ENCODE measurements at regions of chr3 and their contacts with region 1.

Region 1: DNA sequence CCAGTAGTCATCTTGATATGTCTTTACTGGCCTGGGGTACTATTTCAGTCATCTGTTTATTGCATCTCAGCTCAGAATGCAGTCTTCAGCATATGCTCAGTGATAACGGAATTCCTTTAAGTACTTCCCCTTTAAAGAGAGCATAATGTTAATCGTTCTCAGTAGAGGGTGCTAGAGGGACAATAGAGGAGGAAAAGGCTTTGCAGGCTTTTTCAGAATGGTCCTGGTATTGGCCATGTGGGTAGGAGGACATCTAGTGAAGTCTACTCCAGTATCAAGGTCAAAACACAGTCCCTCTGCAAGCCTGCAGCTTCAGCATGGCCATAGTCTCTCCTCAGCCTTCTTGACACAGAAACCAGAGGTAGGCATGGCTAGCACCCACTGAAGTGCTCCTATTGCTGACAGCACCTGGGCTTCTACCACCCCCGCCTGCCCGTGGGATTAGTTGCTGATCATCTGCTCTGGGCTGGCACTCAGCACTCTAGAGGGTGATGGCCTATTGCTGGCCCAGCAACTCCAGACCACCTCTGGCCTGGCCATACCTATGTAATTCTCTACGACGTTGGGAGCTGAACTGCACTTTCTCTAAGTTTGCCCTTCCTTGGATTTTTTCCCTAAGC is 65.4 kb downstream of the KCNH8 start:
- DNase-seq: peak; percentile 67
- ATAC-seq: peak; percentile 69
- H3K4me3 ChIP-seq: no peak overlapping the region
- H3K4me3 Mint-ChIP-seq: no peak overlapping the region
- H3K27ac ChIP-seq: no peak overlapping the region
- H3K27ac Mint-ChIP-seq: no peak overlapping the region
- H3K4me1 ChIP-seq: peaks cover 0 to 7% of the 10 kb centered on the region in 2 donors
- H3K4me1 Mint-ChIP-seq: peaks cover 4% of the 10 kb centered on the region
- H3K27me3 ChIP-seq: no peaks in the 10 kb centered on the region
- H3K27me3 Mint-ChIP-seq: no peaks in the 10 kb centered on the region
- CTCF ChIP-seq: peak; percentile 58

Region 2: GRCh38 chr3:19146685-19147650 is 66.7 kb before region 1 on chr3:
- CTCF ChIA-PET with region 1: interaction called, 8 read pairs
- POLR2A ChIA-PET with region 1: no interaction called
- intact Hi-C with region 1: loop called (anchors 2 kb)
- DNase-seq: peak; percentile 89
- ATAC-seq: peak; percentile 63
- H3K4me3 ChIP-seq: peak overlapping the region; percentile 49 to 84 (median 68)
- H3K4me3 Mint-ChIP-seq: peak overlapping the region; percentile 95
- H3K27ac ChIP-seq: peak overlapping the region; percentile 50 to 80
- H3K27ac Mint-ChIP-seq: peak overlapping the region; percentile 91
- H3K4me1 ChIP-seq: peaks cover 18 to 22% of the 10 kb centered on the region in 2 donors
- H3K4me1 Mint-ChIP-seq: peaks cover 24% of the 10 kb centered on the region
- H3K27me3 ChIP-seq: peaks cover 0 to 5% (median 2%) of the 10 kb centered on the region in 4 experiments
- H3K27me3 Mint-ChIP-seq: peaks cover 13% of the 10 kb centered on the region
- CTCF ChIP-seq: peak; percentile 72

Region 3: DNA sequence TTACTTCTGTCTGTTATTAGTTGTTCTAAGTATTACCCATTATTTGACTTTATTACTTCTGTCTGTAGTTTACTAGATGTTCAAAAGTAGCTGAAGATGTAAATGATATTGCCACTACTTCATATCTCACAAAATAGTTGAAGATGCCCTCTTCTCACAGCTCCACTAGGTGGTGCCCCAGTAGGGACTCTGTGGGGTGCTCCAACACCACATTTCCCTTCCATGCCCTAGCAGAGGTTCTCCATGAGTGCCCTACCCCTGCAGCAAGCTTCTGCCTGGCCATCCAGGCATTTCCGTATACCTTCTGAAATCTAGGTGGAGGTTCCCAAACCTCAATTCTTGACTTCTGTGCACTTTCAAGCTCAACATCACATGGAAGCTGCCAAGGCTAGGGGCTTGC is 15.4 kb after region 1 on chr3:
- CTCF ChIA-PET with region 1: interaction called, 24 read pairs
- POLR2A ChIA-PET with region 1: no interaction called
- intact Hi-C with region 1: no loop called
- DNase-seq: peak; percentile 12
- ATAC-seq: no peak
- H3K4me3 ChIP-seq: peak overlapping the region in 2 of 5 experiments; percentile 13 to 41
- H3K4me3 Mint-ChIP-seq: peak overlapping the region; percentile 69
- H3K27ac ChIP-seq: peak overlapping the region in 1 of 2 donors; percentile 58
- H3K27ac Mint-ChIP-seq: peak overlapping the region; percentile 93
- H3K4me1 ChIP-seq: peaks cover 16% of the 10 kb centered on the region in 2 donors
- H3K4me1 Mint-ChIP-seq: peaks cover 20% of the 10 kb centered on the region
- H3K27me3 ChIP-seq: no peaks in the 10 kb centered on the region
- H3K27me3 Mint-ChIP-seq: peaks cover 4% of the 10 kb centered on the region
- CTCF ChIP-seq: no peak